A549 (cell line): ENCODE measurements at regions of chrX and their contacts with region 1.

Region 1: GRCh38 chrX:72126539-72127140 is 5.1 kb downstream of the RTL5 start:
- DNase-seq: peak; percentile 71 to 76
- ATAC-seq: peak; percentile 81 to 93
- H3K4me3 ChIP-seq: no peak overlapping the region
- H3K27ac ChIP-seq: peak overlapping the region; percentile 63 to 79
- H3K4me1 ChIP-seq: peaks cover 11% of the 10 kb centered on the region
- CTCF ChIP-seq: peak; percentile 73
- EP300 ChIP-seq: no peak
- POLR2A ChIP-seq: no peak
- RAD21 ChIP-seq: peak; percentile 84 to 86

Region 2: DNA sequence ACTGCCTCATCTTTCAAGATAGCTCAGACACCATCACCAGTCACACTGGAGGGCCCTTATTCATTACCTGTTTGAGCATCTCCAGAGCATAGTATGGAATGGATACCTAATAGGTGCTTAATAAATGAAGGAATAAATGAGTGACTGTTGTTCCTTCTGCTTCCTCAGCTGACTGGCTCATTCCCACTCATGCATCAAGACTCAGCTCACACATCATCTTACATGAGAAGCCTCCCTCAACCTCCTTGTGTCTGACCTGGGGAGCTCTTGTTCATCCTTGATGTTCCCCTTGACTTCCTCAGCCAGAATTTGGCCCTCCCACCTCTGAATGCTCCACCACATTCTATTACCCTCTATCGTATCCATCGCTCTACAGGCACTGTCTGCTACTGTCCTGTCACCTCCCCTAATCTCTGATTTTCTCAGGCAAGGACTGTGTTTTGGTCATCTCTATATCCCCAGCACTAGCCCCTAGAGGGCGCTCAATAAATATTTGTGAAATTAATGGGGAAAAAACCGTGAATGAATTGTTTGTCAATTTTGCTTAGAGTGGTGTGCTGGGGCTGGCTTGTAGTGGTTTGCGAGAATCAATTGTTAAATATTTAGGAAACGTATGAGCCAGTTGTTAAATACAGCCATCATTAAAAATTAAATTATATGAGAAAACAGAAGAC is 127.7 kb before region 1 on chrX:
- CTCF ChIA-PET with region 1: interaction called, 44 read pairs
- POLR2A ChIA-PET with region 1: interaction called, 5 read pairs
- DNase-seq: peak; percentile 28 to 46
- ATAC-seq: peak; percentile 80 to 92
- H3K4me3 ChIP-seq: no peak overlapping the region
- H3K27ac ChIP-seq: no peak overlapping the region
- H3K4me1 ChIP-seq: 0 out of 3 replicates have a peak, but pooled peaks cover 2% of the 10 kb centered on the region
- CTCF ChIP-seq: peak; percentile 64
- EP300 ChIP-seq: no peak
- POLR2A ChIP-seq: no peak
- RAD21 ChIP-seq: peak; percentile 59 to 64

Region 3: DNA sequence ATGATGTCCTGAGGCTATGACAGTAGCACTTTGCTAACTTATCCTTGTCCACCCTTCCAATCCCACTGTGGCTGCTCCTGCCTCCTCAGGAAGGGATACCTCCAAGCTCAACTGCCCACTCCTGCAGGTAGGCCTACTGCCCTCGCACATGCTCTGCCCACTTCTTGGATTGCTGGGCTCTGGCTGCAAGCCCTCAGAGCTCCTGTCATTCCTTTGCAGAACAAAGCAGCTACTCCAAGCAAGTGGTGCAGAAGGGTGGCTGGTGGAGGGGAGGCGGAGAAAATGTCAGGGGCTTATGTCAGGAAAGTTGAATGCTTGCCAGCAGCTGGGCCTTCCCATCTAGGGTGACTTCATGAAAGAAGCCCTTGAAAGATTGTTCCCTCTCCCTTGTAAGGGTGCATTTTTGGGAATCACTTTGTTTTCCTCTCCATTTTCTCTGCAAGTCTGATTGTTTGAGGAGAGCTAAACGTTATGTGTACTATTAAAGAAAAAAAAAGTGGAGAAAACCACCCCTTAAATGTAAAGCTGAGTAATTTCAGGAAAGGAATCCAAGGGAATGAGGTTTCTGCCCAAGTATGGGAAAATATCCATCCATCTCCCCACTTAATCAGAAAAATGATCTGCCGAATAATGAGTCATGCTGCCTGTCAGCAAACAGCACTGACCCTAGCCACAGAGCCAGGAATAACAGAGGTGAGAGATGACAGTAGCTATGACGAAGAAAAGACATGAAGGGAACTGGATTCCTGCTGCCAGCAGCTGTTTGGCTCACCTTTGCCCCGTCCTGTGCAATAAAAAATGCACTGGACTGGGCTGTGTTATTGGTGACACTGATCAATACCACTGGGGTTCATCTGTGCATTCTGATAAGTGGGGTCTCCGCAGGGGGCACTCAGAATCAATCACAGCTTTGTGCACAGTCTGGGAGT is 96.9 kb before region 1 on chrX:
- CTCF ChIA-PET with region 1: interaction called, 109 read pairs
- POLR2A ChIA-PET with region 1: interaction called, 3 read pairs
- DNase-seq: peak; percentile 49 to 77
- ATAC-seq: peak; percentile 77 to 88; a peak in 5 of 6 replicates
- H3K4me3 ChIP-seq: no peak overlapping the region
- H3K27ac ChIP-seq: peak overlapping the region; percentile 43 to 82; a peak in 5 of 6 replicates
- H3K4me1 ChIP-seq: peaks cover 36% of the 10 kb centered on the region
- CTCF ChIP-seq: no peak
- EP300 ChIP-seq: no peak
- POLR2A ChIP-seq: no peak
- RAD21 ChIP-seq: no peak

Region 4: GRCh38 chrX:72094894-72095293 is 31.7 kb before region 1 on chrX:
- CTCF ChIA-PET with region 1: no interaction called
- POLR2A ChIA-PET with region 1: no interaction called
- DNase-seq: no peak
- ATAC-seq: no peak
- H3K4me3 ChIP-seq: no peak overlapping the region
- H3K27ac ChIP-seq: no peak overlapping the region
- H3K4me1 ChIP-seq: no peaks in the 10 kb centered on the region
- CTCF ChIP-seq: no peak
- EP300 ChIP-seq: no peak
- POLR2A ChIP-seq: no peak
- RAD21 ChIP-seq: no peak

Region 5: DNA sequence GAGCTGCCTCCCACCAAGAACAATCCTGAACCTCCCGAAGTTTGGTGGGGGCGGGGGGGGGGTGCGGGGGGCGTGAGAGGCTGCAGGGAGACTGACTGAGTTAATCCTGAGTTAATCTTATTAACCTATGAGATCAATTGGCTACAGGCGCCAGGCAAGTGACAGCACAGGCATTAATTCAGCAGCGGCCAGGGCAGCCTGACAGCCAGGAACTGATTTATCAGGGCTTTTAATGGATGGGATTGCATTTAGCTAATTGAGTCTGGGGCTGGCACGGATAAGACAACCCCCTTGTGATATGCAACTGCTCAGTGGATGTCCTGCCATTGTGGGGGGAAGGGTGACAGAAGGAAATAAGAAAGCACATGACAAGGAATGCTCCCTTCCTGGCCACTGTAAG is 11.3 kb before region 1 on chrX:
- CTCF ChIA-PET with region 1: interaction called, 11 read pairs
- POLR2A ChIA-PET with region 1: no interaction called
- DNase-seq: no peak
- ATAC-seq: no peak
- H3K4me3 ChIP-seq: no peak overlapping the region
- H3K27ac ChIP-seq: no peak overlapping the region
- H3K4me1 ChIP-seq: peaks cover 18% of the 10 kb centered on the region
- CTCF ChIP-seq: no peak
- EP300 ChIP-seq: no peak
- POLR2A ChIP-seq: no peak
- RAD21 ChIP-seq: no peak